GM10248 (cell line): ENCODE measurements at regions of chr10 and their contacts with region 1.

Region 1: DNA sequence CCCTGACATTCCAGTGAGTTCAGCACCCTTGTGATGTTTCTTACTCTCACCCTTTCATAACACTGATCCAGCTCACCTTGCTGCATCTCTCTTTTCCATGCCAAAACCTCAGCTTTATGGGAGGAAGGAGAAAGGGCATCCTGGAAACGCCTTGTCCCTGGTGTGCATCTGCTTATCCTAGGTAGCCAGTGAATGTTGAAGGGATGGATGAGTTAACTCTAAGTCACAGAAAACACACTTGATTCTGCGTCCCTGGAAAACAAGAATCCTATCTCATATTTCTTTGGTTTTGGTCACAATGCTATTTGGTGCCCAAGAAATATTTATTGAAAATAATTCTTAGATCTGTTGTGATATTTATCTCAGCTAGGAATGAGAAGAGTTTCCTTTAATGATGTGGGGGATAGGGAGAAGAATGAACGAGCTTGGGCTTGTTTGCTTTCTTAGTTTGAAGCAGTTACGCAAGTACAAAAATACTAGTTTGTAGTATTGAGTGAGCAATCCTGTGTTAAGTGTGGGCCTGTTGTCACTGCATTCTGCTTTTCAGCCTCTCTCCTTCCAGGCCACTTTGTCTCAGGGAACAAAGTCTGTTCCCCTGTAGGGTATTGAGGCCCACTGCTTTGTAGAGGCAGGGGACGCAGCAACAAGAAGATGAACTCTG is 126.5 kb downstream of the ARID5B start:
- DNase-seq: no peak
- CTCF ChIP-seq: no peak

Region 2: GRCh38 chr10:62016623-62017490 is 11.1 kb before region 1 on chr10:
- CTCF ChIA-PET with region 1: interaction called, 22 read pairs
- POLR2A ChIA-PET with region 1: no interaction called
- DNase-seq: peak; percentile 20
- CTCF ChIP-seq: no peak